Left cardiac atrium (tissue), 4 donors: ENCODE measurements at regions of chr17 and their contacts with region 1.

Region 1: DNA sequence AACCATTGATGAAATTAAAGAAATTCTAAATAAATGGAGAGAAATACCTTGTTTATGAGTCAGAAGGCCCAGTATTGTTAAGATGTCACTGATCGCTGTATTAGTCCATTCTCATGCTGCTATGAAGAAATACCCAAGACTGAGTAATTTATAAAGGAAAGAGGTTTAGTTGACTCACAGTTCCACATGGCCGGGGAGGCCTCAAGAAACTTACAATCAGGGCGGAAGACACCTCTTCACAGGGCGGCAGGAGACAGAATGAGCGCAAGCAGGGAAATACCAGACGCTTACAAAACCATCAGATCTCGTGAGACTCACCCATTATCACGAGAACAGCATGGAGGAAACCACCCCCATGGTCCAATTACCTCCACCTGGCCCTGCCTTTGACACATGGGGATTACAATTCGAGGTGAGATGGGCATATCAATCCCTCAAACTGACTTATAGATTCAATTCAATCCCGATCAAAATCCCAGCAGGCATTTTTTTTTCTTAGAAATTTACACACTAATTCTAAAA is 157.2 kb downstream of the ENGASE start:
- DNase-seq: no peak
- ATAC-seq: no peak

Region 2: DNA sequence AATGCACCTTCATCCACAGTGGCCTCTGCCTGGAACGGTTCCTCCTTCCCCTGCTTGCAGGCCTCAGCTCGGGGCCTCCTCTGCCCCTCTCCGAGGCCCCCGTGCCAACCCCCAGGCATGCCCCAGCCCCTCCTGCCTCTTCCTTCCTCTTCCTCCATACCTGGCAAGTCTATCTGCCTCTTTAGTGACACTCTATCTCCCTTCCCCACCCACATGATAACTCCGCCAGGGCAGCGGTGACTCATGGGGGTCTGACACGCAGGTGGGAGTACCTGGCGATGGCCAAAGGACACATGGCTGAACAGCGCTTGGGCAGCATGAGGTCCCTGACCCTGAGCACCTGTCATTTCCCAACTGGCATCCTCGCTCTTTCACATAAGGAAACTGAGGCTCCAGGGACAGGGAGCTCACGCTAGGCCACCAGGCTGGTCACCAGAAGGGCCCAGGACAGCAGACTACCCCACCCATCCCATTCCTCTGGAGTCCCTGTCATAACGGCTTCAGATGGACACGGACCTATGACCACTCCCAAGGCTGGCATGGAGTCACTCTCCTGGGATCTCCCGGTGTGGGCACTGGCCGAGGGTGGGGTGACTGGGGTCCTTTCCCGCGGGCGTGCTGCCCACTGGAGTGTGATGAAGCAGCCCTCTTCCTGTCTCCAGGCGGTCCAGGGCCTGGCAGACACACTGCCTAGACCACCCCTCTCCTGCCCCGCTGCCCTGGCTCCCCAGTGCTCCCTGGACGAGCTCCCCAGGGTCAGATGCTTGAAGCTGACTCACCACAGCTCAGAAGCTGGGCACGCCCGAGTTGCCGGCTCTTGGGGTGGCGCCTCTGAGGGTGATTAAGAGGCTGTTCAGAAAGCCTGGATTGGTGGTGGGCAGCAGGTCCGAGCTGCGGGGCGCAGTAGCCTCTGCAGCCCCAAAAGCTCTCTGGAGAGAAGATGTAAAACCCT is 56.6 kb before region 1 on chr17:
- intact Hi-C with region 1: loop called in 1 of 2 experiments (anchors 10 kb)
- DNase-seq: no peak
- ATAC-seq: no peak